ENCODE measurements at regions of chr3 and their contacts with region 1.

Region 1: GRCh38 chr3:168847291-168847883 is 751.7 kb upstream of the GOLIM4 start:
- DNase-seq: no peak
- ATAC-seq: peak; percentile 65
- H3K4me3 Mint-ChIP-seq: no peak overlapping the region
- H3K27ac Mint-ChIP-seq: no peak overlapping the region
- H3K4me1 Mint-ChIP-seq: peaks cover 40% of the 10 kb centered on the region
- H3K27me3 Mint-ChIP-seq: peaks cover 13% of the 10 kb centered on the region
- CTCF ChIP-seq: peak; percentile 42; the same call in 1 of the 2 replicates

Region 2: GRCh38 chr3:168213920-168214319 is 633.5 kb before region 1 on chr3:
- CTCF ChIA-PET with region 1: interaction called, 67 read pairs
- POLR2A ChIA-PET with region 1: interaction called, 4 read pairs
- DNase-seq: no peak
- ATAC-seq: no peak
- H3K4me3 Mint-ChIP-seq: no peak overlapping the region
- H3K27ac Mint-ChIP-seq: no peak overlapping the region
- H3K4me1 Mint-ChIP-seq: peaks cover 25% of the 10 kb centered on the region
- H3K27me3 Mint-ChIP-seq: peaks cover 3% of the 10 kb centered on the region; the same call in 1 of the 2 replicates
- CTCF ChIP-seq: no peak

Region 3: DNA sequence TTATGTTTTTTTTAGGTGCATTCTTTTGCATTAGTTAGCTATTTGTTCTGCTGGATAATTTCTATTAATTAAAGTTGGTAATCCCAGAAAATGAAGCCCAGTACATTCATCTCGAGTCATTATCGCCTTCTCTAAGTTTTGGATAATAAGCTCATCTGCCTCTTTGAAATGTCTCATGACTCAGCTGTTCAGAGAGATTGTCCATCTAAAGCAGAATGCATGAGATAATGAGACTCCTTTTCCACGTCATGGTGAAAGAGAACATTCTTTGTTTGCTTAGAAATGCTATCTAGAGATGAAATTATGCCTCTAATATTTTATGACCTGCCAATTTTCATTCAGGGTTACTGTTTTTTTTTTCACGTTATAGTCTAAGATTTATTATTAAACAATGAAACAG is 377.0 kb before region 1 on chr3:
- CTCF ChIA-PET with region 1: interaction called, 13 read pairs
- POLR2A ChIA-PET with region 1: no interaction called
- DNase-seq: no peak
- ATAC-seq: no peak
- H3K4me3 Mint-ChIP-seq: no peak overlapping the region
- H3K27ac Mint-ChIP-seq: no peak overlapping the region
- H3K4me1 Mint-ChIP-seq: peaks cover 10% of the 10 kb centered on the region
- H3K27me3 Mint-ChIP-seq: no peaks in the 10 kb centered on the region
- CTCF ChIP-seq: no peak

Region 4: GRCh38 chr3:168511428-168512014 is 335.9 kb before region 1 on chr3:
- CTCF ChIA-PET with region 1: interaction called, 15 read pairs
- POLR2A ChIA-PET with region 1: no interaction called
- DNase-seq: no peak
- ATAC-seq: no peak
- H3K4me3 Mint-ChIP-seq: no peak overlapping the region
- H3K27ac Mint-ChIP-seq: no peak overlapping the region
- H3K4me1 Mint-ChIP-seq: peaks cover 60% of the 10 kb centered on the region
- H3K27me3 Mint-ChIP-seq: no peaks in the 10 kb centered on the region
- CTCF ChIP-seq: 0 out of 2 replicates have a peak, but pooled peaks have one; percentile 22

Region 5: DNA sequence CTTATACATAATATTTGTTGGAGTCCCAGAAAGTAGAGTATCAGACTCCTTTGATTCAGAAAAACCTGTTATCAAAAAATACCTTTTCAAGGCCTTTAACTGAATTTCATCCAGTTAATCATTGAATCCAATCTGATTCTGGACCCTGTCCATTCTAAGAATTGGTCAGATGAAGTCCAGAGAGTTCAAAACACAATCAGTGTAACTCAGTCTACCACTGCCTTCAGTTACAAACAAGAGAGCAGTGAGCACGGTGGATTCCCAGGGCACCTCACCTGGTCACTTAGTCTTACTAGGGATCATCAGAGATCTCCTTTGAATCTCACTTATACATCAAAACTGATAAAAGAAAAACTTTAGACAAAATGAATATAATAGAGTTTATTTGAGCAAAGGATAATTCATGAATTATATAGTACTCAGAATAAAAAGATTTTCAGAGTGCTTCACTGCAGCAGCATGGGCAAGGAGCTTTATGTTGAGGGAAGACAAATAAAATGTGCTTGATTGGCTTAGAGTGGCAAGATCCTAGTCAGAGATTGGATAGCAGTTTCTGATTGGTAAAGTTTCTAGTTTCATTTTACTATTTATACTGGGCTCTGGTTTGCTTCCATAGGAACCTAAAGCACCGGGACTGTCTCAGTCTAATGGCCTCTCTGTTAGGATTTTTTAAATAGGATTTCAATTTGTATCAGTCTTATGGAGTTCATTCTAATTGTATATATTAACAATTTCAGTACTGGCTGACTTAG is 276.8 kb before region 1 on chr3:
- CTCF ChIA-PET with region 1: no interaction called
- POLR2A ChIA-PET with region 1: no interaction called
- DNase-seq: no peak
- ATAC-seq: no peak
- H3K4me3 Mint-ChIP-seq: no peak overlapping the region
- H3K27ac Mint-ChIP-seq: no peak overlapping the region
- H3K4me1 Mint-ChIP-seq: peaks cover 6% of the 10 kb centered on the region
- H3K27me3 Mint-ChIP-seq: no peaks in the 10 kb centered on the region
- CTCF ChIP-seq: no peak

Region 6: DNA sequence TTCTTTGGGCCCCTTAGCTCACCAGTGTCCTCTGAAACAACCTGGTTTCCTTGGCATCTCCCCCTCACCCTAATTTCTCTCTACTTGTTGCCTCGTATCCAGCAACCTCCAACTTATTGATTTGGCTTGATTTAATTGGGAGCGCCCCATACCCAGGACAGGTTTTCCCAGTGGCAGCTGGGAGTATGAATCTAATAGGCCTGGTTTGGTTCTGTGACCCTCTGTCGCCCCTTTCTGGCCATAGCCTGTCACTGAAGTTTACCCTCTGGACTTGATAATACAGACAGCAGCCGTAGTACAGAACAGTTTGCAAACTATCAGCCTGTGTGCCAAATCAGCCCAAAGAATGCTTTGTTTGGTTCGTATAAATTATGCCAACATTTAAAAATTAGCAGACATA is 226.6 kb before region 1 on chr3:
- CTCF ChIA-PET with region 1: interaction called, 108 read pairs
- POLR2A ChIA-PET with region 1: interaction called, 3 read pairs
- DNase-seq: peak; percentile 70
- ATAC-seq: peak; percentile 88
- H3K4me3 Mint-ChIP-seq: no peak overlapping the region
- H3K27ac Mint-ChIP-seq: peak overlapping the region; percentile 62; the same call in 1 of the 2 replicates
- H3K4me1 Mint-ChIP-seq: peaks cover 77% of the 10 kb centered on the region
- H3K27me3 Mint-ChIP-seq: no peaks in the 10 kb centered on the region
- CTCF ChIP-seq: peak; percentile 58

Region 7: GRCh38 chr3:168628549-168628948 is 218.8 kb before region 1 on chr3:
- CTCF ChIA-PET with region 1: interaction called, 108 read pairs
- POLR2A ChIA-PET with region 1: interaction called, 3 read pairs
- DNase-seq: no peak
- ATAC-seq: no peak
- H3K4me3 Mint-ChIP-seq: no peak overlapping the region
- H3K27ac Mint-ChIP-seq: no peak overlapping the region
- H3K4me1 Mint-ChIP-seq: peaks cover 18% of the 10 kb centered on the region
- H3K27me3 Mint-ChIP-seq: no peaks in the 10 kb centered on the region
- CTCF ChIP-seq: no peak